PC-3 (cell line): ENCODE measurements at regions of chr13 and their contacts with region 1.

Region 1: DNA sequence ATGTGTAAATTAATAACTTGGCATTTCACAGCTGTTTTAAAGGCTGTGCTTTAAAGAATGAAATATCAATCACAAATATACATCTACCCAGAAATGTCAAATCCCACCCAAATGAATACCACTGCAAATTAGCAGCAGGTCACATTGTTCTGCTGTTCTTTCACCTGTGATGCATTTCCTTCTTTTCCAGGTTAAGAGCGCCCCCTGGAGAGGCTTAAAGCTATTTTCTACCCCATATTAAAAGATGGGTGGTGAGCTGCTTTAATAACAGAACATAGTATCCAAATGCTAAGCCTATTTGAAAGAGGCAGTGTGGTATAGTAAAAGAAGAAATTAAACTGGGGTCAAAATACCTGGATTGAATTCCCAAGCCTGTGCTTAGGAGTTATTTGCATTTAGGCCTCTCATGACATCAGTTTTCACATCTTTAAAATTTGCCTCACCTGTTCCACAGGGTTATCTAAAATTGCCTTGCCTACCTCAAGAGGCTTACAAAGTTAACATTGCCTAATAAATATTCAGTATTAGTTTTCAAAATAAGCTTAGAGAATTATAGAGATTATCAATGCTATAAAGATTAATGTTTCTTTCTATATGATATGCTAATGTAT is 396.9 kb upstream of the SLITRK5 start:
- DNase-seq: peak; percentile 69
- ATAC-seq: peak; percentile 74
- H3K4me3 ChIP-seq: no peak overlapping the region
- H3K27ac ChIP-seq: no peak overlapping the region
- H3K4me1 ChIP-seq: no peaks in the 10 kb centered on the region
- H3K27me3 ChIP-seq: no peaks in the 10 kb centered on the region
- CTCF ChIP-seq: peak; percentile 72

Region 2: GRCh38 chr13:85970727-85971126 is 1303.6 kb before region 1 on chr13:
- CTCF ChIA-PET with region 1: interaction called, 5 read pairs
- POLR2A ChIA-PET with region 1: no interaction called
- intact Hi-C with region 1: loop called (anchors 10 kb)
- DNase-seq: peak; percentile 36
- ATAC-seq: no peak
- H3K4me3 ChIP-seq: no peak overlapping the region
- H3K27ac ChIP-seq: no peak overlapping the region
- H3K4me1 ChIP-seq: peaks cover 12% of the 10 kb centered on the region
- H3K27me3 ChIP-seq: no peaks in the 10 kb centered on the region
- CTCF ChIP-seq: peak; percentile 46

Region 3: DNA sequence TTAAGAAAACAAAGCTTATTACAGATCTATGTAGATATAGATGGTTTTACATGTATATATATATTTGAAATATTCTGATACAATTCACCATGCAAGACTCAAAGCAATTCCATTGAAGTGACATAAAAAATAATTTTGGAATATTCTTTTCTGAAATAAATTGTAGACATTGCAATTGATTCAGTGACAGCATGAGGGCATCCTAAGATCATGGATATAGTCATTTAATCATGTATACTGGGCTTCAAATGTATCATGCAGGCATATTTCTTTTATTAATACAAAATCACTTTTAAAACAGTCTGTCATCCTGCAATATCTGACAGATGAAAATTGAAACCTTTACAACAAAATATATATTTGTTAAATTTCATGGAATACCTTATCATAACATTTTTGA is 1188.4 kb before region 1 on chr13:
- CTCF ChIA-PET with region 1: interaction called, 5 read pairs
- POLR2A ChIA-PET with region 1: no interaction called
- intact Hi-C with region 1: loop called (anchors 2 kb)
- DNase-seq: peak; percentile 13
- ATAC-seq: no peak
- H3K4me3 ChIP-seq: no peak overlapping the region
- H3K27ac ChIP-seq: no peak overlapping the region
- H3K4me1 ChIP-seq: peaks cover 7% of the 10 kb centered on the region; the same call in 1 of the 2 replicates
- H3K27me3 ChIP-seq: no peaks in the 10 kb centered on the region
- CTCF ChIP-seq: peak; percentile 48; the same call in 1 of the 2 replicates

Region 4: DNA sequence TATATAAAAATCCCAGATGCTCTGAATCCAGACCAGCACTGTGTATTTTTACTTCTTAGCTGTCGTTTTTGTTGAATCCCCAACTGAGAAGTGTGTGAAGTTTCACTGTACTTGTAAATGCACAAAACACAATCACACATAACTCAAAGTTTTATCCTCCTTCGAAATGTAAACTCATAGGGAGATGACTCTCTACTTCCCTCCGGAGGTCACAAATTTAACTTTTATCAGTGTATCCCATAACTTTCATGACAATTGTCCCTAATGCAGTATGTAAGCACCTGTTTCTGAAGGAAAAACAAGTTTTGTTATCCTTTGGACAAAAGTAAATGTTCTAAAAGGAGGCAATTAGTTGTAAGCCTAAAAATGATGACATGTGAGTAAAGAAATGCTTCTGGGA is 810.1 kb before region 1 on chr13:
- CTCF ChIA-PET with region 1: no interaction called
- POLR2A ChIA-PET with region 1: no interaction called
- intact Hi-C with region 1: loop called (anchors 10 kb)
- DNase-seq: peak; percentile 18
- ATAC-seq: peak; percentile 43; the same call in 1 of the 2 replicates
- H3K4me3 ChIP-seq: no peak overlapping the region
- H3K27ac ChIP-seq: no peak overlapping the region
- H3K4me1 ChIP-seq: no peaks in the 10 kb centered on the region
- H3K27me3 ChIP-seq: no peaks in the 10 kb centered on the region
- CTCF ChIP-seq: no peak; the same call in 1 of the 2 replicates

Region 5: GRCh38 chr13:86741762-86742285 is 532.5 kb before region 1 on chr13:
- CTCF ChIA-PET with region 1: no interaction called
- POLR2A ChIA-PET with region 1: no interaction called
- intact Hi-C with region 1: loop called (anchors 10 kb)
- DNase-seq: peak; percentile 24
- ATAC-seq: no peak
- H3K4me3 ChIP-seq: no peak overlapping the region
- H3K27ac ChIP-seq: no peak overlapping the region
- H3K4me1 ChIP-seq: no peaks in the 10 kb centered on the region
- H3K27me3 ChIP-seq: no peaks in the 10 kb centered on the region
- CTCF ChIP-seq: peak; percentile 46

Region 6: DNA sequence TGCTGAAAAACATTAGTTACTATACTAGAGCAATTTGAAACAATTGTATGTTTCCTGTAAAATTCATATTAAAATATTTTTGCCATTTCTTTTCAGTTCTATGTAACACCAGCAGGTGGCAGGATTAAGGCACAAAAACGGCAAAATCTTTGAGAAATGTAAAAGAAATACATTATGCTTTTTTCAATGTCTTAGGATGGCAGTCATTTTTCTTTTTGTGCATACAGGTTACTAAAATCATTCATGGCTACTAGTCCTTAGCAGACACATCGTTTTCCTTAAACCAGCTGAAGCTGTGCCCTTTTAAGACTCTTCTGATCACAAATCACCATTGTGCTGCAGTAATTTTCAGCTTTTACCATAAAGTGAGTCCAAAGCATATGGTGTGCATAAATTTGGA is 403.9 kb before region 1 on chr13:
- CTCF ChIA-PET with region 1: interaction called, 5 read pairs
- POLR2A ChIA-PET with region 1: no interaction called
- intact Hi-C with region 1: loop called (anchors 1 kb)
- DNase-seq: peak; percentile 38
- ATAC-seq: no peak
- H3K4me3 ChIP-seq: no peak overlapping the region
- H3K27ac ChIP-seq: no peak overlapping the region
- H3K4me1 ChIP-seq: no peaks in the 10 kb centered on the region
- H3K27me3 ChIP-seq: no peaks in the 10 kb centered on the region
- CTCF ChIP-seq: peak; percentile 67

Region 7: DNA sequence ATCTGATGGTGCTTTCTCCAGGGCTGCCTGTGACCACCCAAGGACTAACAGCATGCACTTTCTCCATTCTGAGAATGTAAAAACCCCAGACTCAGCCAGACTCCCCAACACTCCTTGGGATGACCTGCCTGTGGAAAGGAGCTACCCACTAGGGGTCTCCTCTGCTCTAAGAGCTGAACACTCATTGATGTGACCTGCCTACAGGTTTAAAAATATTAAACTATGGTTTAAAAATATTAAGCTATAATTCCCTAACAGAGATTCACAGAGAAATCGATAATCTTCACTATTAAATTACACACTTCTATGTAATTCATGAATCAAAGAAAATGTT is 299.4 kb before region 1 on chr13:
- CTCF ChIA-PET with region 1: interaction called, 8 read pairs
- POLR2A ChIA-PET with region 1: no interaction called
- intact Hi-C with region 1: loop called (anchors 1 kb)
- DNase-seq: no peak
- ATAC-seq: peak; percentile 54
- H3K4me3 ChIP-seq: no peak overlapping the region
- H3K27ac ChIP-seq: no peak overlapping the region
- H3K4me1 ChIP-seq: no peaks in the 10 kb centered on the region
- H3K27me3 ChIP-seq: no peaks in the 10 kb centered on the region
- CTCF ChIP-seq: 0 out of 2 replicates have a peak, but pooled peaks have one; percentile 35